ENCODE measurements at regions of chr3 and their contacts with region 1.

Region 1: DNA sequence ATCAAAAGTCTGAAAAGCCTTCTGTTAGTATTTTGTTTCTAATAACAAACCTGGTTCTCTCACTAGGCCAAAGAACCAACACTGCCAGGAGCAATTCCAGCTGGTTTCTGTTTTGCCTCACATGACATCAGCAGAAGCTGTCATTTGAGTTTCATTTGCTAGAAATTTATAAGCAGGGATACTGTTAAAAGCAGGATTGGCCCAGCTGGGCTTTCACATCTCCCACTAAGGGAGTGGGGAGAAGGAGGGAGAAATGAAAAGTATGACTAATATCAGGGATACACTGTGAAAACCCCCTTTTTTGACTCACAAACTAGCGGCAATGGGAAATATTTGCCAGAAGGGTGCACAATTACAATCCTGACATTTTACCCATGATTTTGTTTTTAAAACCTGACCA is 5.3 kb downstream of the CCDC80 start:
- DNase-seq: peak; percentile 90
- H3K4me3 ChIP-seq: peak overlapping the region in 3 of 4 donors; percentile 19 to 51 (median 48)
- H3K27ac ChIP-seq: peak overlapping the region; percentile 80 to 86 (median 84)
- H3K4me1 ChIP-seq: peaks cover 2 to 96% (median 84%) of the 10 kb centered on the region in 4 donors
- H3K27me3 ChIP-seq: no peaks in the 10 kb centered on the region
- CTCF ChIP-seq: no peak
- EP300 ChIP-seq: peak; percentile 47 to 92 (median 77)
- POLR2A ChIP-seq: peak in 1 of 2 donors; percentile 11

Region 2: DNA sequence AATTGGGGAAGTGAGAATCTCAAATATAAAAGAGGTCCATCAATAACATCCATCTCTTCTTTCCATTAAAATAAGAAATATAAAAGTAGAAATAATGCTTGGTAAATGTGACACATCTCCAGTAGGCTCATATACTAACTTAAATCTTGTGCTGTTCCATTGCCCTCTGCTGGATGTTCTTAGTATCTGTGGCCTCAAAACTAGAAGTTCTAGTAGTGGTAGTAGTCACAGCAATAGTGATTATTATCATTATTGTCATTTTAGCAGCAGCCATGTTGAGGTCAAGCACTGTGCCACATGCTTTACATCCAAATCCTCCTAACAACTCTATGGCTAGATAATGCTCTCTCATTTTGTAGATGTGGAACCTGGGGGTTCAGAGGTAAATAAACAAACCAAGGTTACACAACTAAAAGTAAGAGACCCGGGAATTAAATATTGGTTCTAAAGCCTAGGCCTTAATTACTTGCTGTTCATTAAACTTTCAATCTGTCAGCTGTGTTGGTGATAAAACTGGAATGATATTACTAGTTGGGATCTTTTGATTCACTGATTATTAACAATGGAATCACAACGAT is 116.2 kb before region 1 on chr3:
- intact Hi-C with region 1: no loop called
- DNase-seq: no peak
- H3K4me3 ChIP-seq: no peak overlapping the region
- H3K27ac ChIP-seq: no peak overlapping the region
- H3K4me1 ChIP-seq: no peaks in the 10 kb centered on the region
- H3K27me3 ChIP-seq: no peaks in the 10 kb centered on the region
- CTCF ChIP-seq: peak; percentile 34 to 76 (median 66)
- EP300 ChIP-seq: no peak
- POLR2A ChIP-seq: no peak

Region 3: GRCh38 chr3:112561731-112562688 is 73.7 kb before region 1 on chr3 and contains the starts of genes ATG3 and SLC35A5:
- intact Hi-C with region 1: loop called (anchors 5 kb)
- DNase-seq: peak; percentile 99
- H3K4me3 ChIP-seq: peak within 1 kb of the TSS; percentile 68 to 98 (median 88)
- H3K27ac ChIP-seq: peak within 1 kb of the TSS; percentile 94 to 98 (median 97)
- H3K4me1 ChIP-seq: peaks cover 0 to 37% (median 27%) of the 10 kb centered on the region in 4 donors
- H3K27me3 ChIP-seq: no peaks in the 10 kb centered on the region
- CTCF ChIP-seq: no peak
- EP300 ChIP-seq: peak in 1 of 4 donors; percentile 70
- POLR2A ChIP-seq: peak; percentile 67 to 79
- total RNA-seq, gene ATG3: 28.0 to 49.5 (median 41.1) TPM
- total RNA-seq, gene SLC35A5: 16.1 to 32.1 (median 17.5) TPM

Region 4: DNA sequence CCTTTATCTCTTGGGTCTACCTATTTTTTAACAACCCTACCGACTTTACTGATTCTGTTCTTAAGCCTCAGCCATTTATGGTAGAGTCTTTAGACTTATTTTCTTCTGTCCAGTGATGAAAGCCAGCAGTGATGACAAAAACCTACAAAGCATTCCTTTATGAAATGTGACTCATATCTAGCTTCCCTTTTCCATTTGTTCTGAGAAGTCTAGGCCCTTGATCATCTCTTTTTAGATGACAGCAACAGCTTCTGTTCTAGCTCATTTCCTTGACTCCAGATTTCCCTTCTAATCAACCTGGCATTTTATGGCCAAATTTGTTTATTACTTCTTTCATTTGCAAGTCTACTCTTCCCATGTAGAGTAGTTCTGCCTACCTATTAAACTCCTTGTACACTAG is 769.5 kb after region 1 on chr3:
- intact Hi-C with region 1: loop called (anchors 10 kb)
- DNase-seq: no peak
- H3K4me3 ChIP-seq: no peak overlapping the region
- H3K27ac ChIP-seq: peak overlapping the region in 2 of 4 donors; percentile 30 to 33
- H3K4me1 ChIP-seq: peaks cover 0 to 19% (median 13%) of the 10 kb centered on the region in 4 donors
- H3K27me3 ChIP-seq: no peaks in the 10 kb centered on the region
- CTCF ChIP-seq: no peak
- EP300 ChIP-seq: peak in 3 of 4 donors; percentile 54 to 81 (median 71)
- POLR2A ChIP-seq: no peak

Measured in sigmoid colon (tissue), 7 donors.